Left cardiac atrium (tissue), 4 donors: ENCODE measurements at regions of chr14 and their contacts with region 1.

Region 1: DNA sequence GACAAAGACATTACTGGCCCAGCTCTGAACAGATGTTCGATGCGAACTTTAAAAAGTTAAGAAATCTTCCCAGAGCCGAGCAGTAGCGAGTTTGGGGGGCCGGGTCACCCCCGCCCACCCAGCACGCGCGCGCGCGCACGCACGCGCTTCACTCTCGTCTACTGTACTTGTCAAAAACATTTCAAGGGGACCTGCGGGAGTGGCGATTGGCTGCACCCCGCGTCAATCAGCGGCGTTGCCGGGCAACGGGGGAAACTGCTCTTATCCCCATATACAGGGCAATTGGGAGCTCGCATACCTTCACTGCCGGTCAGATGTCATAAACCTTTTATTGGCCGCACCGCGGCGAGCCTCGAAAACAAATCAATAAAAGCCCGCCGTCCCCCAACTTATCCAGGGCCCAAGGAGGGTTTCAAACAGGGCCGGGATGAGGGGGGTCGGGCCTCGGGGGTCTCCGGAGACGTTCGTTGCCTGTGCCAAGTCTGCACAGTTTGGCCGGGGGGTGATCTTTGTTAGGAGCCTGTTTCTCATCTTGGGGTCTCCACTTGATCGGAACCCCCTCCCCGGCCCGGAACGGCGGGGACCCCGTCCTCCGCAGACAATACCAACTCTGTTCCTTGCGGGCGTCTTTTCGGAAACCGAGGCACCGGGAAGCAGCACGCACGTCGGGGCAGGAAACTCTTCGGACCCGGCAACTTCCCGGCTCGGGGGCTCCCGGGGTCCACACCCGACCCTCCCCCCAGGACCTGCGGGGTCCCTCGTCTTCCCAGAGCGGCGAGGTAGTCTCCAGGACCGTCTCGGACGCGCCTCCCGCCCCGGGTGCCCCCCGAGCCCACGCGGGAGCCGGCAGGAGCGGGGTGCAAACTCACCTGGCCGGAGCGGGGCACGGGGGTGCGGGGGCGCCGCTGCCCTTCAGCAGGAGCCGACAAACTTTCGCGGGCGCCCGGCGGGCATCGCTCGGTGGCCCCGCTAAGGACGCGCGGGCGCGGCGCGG is 734 bp downstream of the FOXN3 start:
- DNase-seq: peak; percentile 96
- ATAC-seq: peak; percentile 90 to 91

Region 2: DNA sequence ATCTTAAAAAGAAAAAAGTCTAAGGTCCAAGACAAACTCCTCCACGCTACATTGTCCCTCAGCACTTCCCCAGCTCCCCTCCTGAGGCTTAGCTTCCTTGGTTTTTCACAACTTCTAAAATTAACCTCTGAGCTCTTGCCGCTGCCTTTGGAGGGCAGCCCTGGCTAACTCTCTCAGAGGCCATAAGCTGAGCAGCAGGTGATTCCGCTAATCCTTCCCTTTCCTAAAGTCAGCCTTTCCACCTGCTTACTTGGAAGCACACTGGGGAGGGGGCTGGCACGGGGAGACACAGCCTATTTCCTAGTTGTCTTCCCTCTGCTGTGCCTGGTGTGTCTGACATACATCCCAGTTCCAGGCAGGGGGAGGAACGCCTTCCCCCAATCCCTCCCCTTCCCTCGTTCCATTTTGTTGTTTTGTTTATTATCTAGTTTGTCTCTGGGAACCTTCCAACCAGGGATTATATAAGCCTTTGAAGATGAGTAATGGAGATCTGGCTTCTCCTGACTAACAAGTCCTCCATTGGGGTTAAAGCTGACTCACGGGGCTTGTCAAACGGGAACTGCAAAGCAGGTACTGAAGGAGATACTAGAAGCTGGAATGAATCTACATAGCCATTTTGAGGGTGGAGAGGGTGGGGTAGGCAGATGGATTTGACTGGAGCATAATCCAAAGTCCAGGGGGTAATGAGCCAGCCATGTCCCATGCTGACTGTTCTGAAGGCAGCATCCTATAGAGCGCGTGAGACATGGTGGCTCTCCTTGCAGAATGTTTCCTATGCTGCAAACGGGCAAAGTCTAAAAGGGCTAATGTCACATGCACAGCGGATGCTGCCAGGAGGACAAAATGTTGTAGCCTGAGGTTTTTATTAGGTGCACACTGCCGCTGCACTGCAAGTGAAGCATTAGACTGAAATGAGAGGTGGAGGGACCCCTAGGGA is 230.1 kb before region 1 on chr14:
- intact Hi-C with region 1: loop called in 1 of 2 experiments (anchors 10 kb)
- DNase-seq: no peak
- ATAC-seq: peak; percentile 53 to 82

Region 3: DNA sequence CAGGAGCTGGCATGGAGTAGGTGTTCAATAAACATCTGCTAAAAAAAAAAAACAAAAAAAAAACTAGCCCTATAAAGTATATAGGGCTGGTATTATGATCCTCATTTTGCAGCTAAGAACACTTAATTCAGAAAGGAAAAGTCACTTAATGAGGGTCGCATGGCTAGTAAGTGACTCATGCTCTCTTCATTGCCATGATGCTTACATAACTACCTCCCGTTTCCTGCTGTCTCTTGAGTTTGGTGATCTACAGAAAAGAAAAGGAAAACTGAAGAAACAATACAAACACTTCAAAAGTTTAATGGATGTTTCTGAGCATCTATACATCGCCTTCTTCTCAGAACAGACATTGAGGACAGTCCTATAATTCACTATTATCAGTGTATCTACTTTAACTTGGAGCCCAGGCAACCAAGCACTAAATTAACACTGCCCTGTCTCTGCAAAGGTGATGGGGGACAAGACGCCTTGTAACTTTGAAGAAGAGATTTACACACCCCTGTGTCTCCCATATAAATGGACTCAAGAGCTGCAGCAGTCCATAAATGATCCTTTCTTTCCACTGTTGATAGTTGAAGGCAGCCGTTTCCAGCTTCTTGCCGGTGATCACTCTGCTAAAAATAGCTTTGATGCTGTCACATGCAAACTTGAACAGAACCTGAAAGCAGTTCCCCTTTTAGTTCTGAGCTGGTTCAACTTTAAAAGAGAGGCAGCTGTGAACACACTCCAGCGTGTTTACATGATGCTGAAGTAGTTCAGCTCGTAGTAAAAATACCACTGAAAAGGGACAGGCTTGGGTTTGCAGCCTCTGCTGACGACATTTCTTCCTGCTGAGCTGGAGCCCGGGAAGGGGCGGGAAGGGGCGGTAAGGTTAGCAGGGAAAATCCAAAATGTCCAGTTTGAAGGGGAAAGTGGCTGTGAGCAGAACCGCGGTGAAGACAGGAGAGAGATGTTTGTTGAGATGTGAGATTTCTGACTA is 112.6 kb before region 1 on chr14:
- intact Hi-C with region 1: loop called in 1 of 2 experiments (anchors 10 kb)
- DNase-seq: peak; percentile 66
- ATAC-seq: peak; percentile 72 to 76

Region 4: GRCh38 chr14:89618811-89619551 is 202.7 kb after region 1 on chr14:
- intact Hi-C with region 1: loop called in 1 of 2 experiments (anchors 5 kb)
- DNase-seq: peak; percentile 81
- ATAC-seq: peak; percentile 95 to 96